PC-9 (cell line): ENCODE measurements at regions of chr14 and their contacts with region 1.

Region 1: DNA sequence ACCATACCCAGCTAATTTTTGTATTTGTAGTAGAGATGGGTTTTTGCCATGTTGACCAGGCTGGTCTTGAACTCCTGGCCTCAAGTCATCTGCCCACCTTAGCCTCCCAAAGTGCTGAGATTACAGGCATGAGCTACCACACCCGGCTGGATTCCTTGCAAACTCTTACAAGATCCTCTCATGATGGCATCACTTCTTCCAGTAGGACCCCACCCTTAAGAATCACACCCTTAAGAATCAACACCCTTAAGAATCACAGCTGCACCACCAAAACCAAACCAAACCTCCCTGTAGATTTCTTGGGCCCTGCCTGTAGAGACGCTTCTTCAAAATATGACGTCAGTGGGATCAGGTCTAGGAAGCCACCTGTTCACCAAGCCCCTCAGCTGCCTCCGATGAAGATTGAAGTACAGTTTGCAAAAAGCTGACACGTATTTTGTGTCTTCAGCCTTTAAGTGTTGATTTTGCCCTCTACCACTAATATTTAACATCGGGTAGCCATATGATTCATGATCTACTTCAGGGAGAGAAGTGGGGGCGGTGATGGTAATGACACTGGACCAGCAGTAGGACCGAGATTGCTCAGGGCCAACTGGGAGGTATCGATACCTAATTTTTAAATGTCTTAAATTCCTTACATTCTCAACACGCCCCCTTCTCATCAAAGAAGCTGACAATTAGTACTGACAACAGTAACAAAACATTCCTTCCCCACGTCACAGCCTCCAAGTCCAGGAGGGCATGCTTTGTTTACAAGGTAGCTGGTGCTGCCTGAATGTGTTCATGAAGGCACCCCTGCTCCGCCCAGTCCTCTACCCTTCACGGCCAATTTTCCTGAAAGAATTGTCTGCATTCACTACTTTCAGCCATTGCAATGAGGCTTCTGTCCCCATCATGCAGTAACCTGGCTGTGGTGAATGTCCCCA is 57.2 kb downstream of the ESRRB start:
- DNase-seq: no peak
- H3K4me3 ChIP-seq: no peak overlapping the region
- H3K27ac ChIP-seq: no peak overlapping the region
- H3K4me1 ChIP-seq: no peaks in the 10 kb centered on the region
- H3K27me3 ChIP-seq: peaks cover 98% of the 10 kb centered on the region
- CTCF ChIP-seq: no peak

Region 2: GRCh38 chr14:76456200-76456599 is 23.1 kb after region 1 on chr14:
- CTCF ChIA-PET with region 1: no interaction called
- POLR2A ChIA-PET with region 1: interaction called, 16 read pairs
- intact Hi-C with region 1: no loop called
- DNase-seq: peak in 1 of 2 experiments; percentile 15
- H3K4me3 ChIP-seq: no peak overlapping the region
- H3K27ac ChIP-seq: no peak overlapping the region
- H3K4me1 ChIP-seq: no peaks in the 10 kb centered on the region
- H3K27me3 ChIP-seq: peaks cover 91% of the 10 kb centered on the region
- CTCF ChIP-seq: peak; percentile 71